ENCODE measurements at regions of chr2 and their contacts with region 1.

Region 1: DNA sequence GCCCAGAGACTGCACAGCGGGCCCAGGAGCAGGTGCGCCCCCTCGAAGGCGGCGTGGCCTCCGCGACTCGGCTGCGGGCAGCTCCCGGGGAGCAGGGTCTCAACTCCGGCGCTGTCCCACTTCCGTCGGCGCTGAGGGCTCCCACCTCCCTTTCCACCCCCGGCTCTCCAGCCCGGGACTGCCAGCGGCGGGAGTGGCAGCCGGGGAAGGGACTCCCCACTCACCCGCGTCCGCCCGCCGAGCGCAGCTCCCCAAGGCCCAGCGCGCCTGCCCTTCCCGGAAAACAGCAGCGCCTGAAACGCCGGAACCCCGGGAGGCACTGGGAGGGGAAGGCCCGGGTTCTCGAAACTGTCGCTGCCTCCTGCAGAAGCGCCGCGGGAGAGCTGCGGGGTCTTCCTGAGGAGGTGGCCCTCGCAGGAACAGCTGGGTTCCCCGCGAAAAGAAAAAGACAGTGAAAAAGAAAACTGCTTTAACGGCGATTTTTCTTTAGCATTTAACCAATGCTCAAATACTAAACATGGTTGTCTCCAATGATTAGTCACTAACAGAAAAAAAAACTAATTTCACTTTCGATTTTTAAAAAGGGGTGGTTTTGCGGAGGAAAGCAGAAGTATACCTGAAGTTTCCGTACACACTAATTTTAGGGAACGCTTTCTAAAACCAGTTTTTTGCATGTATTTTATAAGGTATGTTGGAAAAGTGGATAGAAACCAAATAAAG is at the start of gene NMI:
- DNase-seq: peak; percentile 46 to 80 (median 73)
- H3K4me3 ChIP-seq: peak within 1 kb of the TSS; percentile 63
- H3K4me3 Mint-ChIP-seq: peak within 1 kb of the TSS; percentile 90 to 96 (median 95)
- H3K27ac ChIP-seq: peak within 1 kb of the TSS; percentile 93
- H3K27ac Mint-ChIP-seq: peak within 1 kb of the TSS; percentile 93 to 99 (median 98)
- H3K4me1 ChIP-seq: peaks cover 37% of the 10 kb centered on the region
- H3K4me1 Mint-ChIP-seq: peaks cover 42 to 58% (median 57%) of the 10 kb centered on the region in 3 donors
- H3K27me3 ChIP-seq: no peaks in the 10 kb centered on the region
- H3K27me3 Mint-ChIP-seq: peaks cover 0 to 3% of the 10 kb centered on the region in 2 donors
- total RNA-seq, gene NMI: 34.5 to 35.7 TPM

Region 2: DNA sequence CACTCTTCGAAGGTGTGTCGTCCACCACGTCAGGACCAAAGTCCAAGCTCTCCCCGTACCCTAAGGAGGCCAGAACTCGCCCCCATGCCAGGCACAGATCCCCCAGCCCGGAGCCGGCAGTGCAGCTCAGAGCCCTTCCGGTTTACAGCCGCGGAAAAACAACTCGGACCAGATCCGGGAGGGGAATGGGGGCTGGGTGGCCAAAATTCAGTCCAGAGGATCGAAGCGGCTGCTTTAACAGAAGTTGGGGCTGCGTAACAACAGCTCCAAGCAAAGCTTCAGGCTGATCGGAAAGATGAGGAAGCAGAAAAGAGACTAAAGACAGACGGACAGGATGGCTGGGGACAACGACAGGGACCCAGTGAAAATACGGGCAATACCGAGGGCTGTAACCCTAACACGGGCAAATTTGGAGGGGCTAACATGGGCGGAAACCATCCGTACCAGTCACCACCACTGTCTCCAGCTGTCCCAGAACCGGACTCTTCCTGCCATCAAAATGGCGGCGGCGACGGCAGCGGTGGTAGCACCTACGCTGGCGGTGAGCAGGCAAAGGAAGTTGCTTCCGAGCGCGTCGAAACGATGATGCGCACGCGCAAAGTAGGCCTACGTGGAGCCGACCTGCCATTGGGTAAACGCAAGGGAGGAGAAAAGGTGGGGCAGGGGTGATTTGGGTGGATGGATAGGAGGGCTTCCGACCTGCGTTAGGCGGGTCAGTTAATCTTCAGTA is 1702.1 kb before region 1 on chr2 and contains the start of gene MMADHC:
- CTCF ChIA-PET with region 1: no interaction called
- POLR2A ChIA-PET with region 1: interaction called, 10 read pairs
- DNase-seq: peak; percentile 86 to 96 (median 91)
- H3K4me3 ChIP-seq: peak within 1 kb of the TSS; percentile 94
- H3K4me3 Mint-ChIP-seq: peak within 1 kb of the TSS; percentile 92 to 99 (median 95)
- H3K27ac ChIP-seq: peak within 1 kb of the TSS; percentile 98
- H3K27ac Mint-ChIP-seq: peak within 1 kb of the TSS; percentile 96 to 100 (median 98)
- H3K4me1 ChIP-seq: peaks cover 42% of the 10 kb centered on the region
- H3K4me1 Mint-ChIP-seq: peaks cover 42 to 56% (median 54%) of the 10 kb centered on the region in 3 donors
- H3K27me3 ChIP-seq: no peaks in the 10 kb centered on the region
- H3K27me3 Mint-ChIP-seq: peaks cover 8 to 31% of the 10 kb centered on the region in 2 donors
- total RNA-seq, gene MMADHC: 149 to 156 TPM

Region 3: DNA sequence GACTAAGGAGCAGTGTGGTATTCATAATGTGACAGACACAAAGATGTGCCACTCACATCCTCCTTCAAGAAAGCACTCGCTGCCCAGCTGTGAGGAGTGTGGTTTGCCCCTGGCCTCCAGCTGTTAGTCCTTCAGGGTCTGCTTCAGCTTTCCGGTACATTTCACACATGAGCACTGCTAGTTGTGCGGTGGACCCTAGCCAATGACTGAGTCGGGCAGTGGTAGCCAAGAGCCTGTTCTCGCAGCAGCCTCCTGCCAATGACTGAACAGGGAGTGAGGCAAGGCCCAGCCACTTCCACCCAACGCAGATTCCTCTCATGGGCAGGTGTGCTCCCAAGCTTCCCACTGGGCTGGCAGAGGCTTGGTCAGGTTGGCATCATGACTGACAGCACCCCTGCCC is 282.2 kb before region 1 on chr2:
- CTCF ChIA-PET with region 1: no interaction called
- POLR2A ChIA-PET with region 1: no interaction called
- DNase-seq: peak in 1 of 5 donors; percentile 41
- H3K4me3 ChIP-seq: no peak overlapping the region
- H3K4me3 Mint-ChIP-seq: no peak overlapping the region
- H3K27ac ChIP-seq: no peak overlapping the region
- H3K27ac Mint-ChIP-seq: no peak overlapping the region
- H3K4me1 ChIP-seq: no peaks in the 10 kb centered on the region
- H3K4me1 Mint-ChIP-seq: no peaks in the 10 kb centered on the region
- H3K27me3 ChIP-seq: no peaks in the 10 kb centered on the region
- H3K27me3 Mint-ChIP-seq: no peaks in the 10 kb centered on the region

Region 4: DNA sequence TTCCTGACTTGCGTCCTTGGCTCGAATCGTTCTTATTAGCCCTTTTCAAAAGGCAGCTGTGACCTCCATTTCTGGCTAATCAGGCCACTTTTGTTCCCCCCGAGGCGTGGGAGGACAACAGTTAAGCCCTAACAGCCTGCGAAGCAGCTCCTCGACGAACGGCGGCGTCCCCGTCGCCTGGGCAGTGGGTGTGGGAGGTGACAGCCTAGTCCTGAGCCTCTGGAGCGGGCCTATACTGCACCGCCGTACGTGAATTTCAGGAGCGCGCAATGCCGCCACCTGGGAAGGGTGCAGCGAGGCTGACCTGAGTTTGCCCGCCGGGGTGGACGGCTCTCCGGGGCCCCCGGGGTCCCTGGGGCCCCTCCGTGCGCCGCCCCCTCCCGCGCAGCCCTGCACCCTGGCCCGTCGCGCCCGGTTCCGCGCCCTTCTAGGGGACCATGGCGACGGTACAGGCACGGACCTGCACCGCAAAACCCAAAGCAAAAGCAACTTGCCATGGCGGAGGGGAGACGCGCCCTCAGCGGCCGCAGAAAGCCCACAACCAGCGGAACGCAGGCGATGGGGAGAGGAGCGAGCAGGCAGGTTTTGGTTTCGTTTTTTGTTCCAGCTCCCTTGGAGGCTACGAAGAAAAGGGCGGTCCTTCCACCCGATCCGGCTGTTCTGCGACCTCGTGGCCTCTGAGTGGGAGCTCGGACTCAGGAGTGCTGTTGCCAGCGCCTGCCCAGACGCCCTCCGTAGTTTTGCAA is 28.1 kb before region 1 on chr2 and contains the start of gene RBM43:
- CTCF ChIA-PET with region 1: interaction called, 20 read pairs
- POLR2A ChIA-PET with region 1: interaction called, 61 read pairs
- DNase-seq: peak; percentile 75 to 91 (median 86)
- H3K4me3 ChIP-seq: peak within 1 kb of the TSS; percentile 72
- H3K4me3 Mint-ChIP-seq: peak within 1 kb of the TSS; percentile 83 to 96 (median 94)
- H3K27ac ChIP-seq: peak within 1 kb of the TSS; percentile 98
- H3K27ac Mint-ChIP-seq: peak within 1 kb of the TSS; percentile 89 to 99 (median 98)
- H3K4me1 ChIP-seq: peaks cover 7% of the 10 kb centered on the region
- H3K4me1 Mint-ChIP-seq: peaks cover 30 to 39% (median 36%) of the 10 kb centered on the region in 3 donors
- H3K27me3 ChIP-seq: no peaks in the 10 kb centered on the region
- H3K27me3 Mint-ChIP-seq: peaks cover 0 to 1% of the 10 kb centered on the region in 2 donors
- total RNA-seq, gene RBM43: 2.8 to 3.4 TPM

Region 5: DNA sequence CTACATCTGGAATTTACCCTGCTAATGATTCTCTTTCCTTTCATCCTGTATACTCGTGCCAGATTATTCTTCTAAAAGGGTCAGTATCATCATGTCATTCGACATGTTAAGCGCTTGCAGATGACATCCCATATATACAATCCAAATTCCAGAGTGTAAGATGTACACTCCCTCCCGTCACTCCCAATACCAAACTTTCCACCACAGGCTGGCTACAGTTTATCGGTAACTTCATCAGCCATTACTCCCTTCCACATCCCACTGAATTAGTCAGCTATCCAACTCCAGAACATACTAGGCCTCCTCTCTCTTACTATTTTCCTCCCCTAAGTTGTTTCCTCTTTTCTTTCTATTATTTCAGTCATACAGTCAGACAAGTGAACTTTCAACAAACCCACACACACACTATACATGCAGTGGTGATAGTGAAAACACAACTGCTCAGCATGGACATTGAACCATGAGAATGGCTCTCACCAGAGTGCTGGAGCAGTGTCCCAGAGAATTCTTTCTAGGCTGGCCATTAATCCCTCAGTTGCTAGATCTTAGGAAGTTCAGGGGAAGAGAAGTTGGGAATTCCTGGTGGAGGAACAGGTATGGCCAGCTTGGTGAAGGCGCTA is 10.5 kb after region 1 on chr2:
- CTCF ChIA-PET with region 1: no interaction called
- POLR2A ChIA-PET with region 1: no interaction called
- DNase-seq: no peak
- H3K4me3 ChIP-seq: no peak overlapping the region
- H3K4me3 Mint-ChIP-seq: no peak overlapping the region
- H3K27ac ChIP-seq: no peak overlapping the region
- H3K27ac Mint-ChIP-seq: no peak overlapping the region
- H3K4me1 ChIP-seq: no peaks in the 10 kb centered on the region
- H3K4me1 Mint-ChIP-seq: no peaks in the 10 kb centered on the region
- H3K27me3 ChIP-seq: no peaks in the 10 kb centered on the region
- H3K27me3 Mint-ChIP-seq: peaks cover 4 to 38% of the 10 kb centered on the region in 2 donors

Region 6: DNA sequence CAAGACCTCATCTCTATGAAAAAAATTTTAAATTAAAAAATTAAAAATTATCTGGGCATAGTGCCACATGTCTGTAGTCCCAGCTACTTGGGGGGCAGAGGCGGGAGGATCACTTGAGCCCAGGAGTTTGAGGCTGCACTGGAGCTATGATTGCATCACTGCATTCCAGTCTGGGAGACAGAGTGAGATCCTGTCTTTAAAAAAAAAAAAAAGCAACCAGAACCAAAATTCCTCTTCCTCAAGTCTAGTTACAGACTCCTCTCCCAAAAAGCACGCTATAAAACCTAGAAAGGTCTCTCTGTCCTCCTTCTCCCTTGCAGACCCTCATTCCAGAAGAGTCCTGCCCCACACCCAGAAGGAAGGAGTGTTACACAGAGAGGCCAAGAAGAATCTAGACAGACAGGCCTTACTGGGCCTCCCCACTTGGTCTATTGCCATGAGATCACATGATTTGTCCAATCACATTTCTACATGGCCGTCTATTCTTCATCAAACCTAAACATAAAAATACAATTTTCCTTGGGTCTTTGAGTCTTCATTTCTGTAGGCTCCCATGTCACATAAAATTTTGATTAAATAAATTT is 91.9 kb after region 1 on chr2:
- CTCF ChIA-PET with region 1: no interaction called
- POLR2A ChIA-PET with region 1: no interaction called
- DNase-seq: no peak
- H3K4me3 ChIP-seq: no peak overlapping the region
- H3K4me3 Mint-ChIP-seq: no peak overlapping the region
- H3K27ac ChIP-seq: no peak overlapping the region
- H3K27ac Mint-ChIP-seq: no peak overlapping the region
- H3K4me1 ChIP-seq: no peaks in the 10 kb centered on the region
- H3K4me1 Mint-ChIP-seq: no peaks in the 10 kb centered on the region
- H3K27me3 ChIP-seq: no peaks in the 10 kb centered on the region
- H3K27me3 Mint-ChIP-seq: peaks cover 0 to 2% of the 10 kb centered on the region in 2 donors

Region 7: GRCh38 chr2:151828143-151828889 is 538.8 kb after region 1 on chr2 and contains the start of gene ARL5A:
- CTCF ChIA-PET with region 1: no interaction called
- POLR2A ChIA-PET with region 1: interaction called, 10 read pairs
- DNase-seq: peak; percentile 92 to 96 (median 96)
- H3K4me3 ChIP-seq: peak within 1 kb of the TSS; percentile 63
- H3K4me3 Mint-ChIP-seq: peak within 1 kb of the TSS; percentile 82 to 97 (median 88)
- H3K27ac ChIP-seq: peak within 1 kb of the TSS; percentile 52
- H3K27ac Mint-ChIP-seq: peak within 1 kb of the TSS; percentile 78 to 95 (median 92)
- H3K4me1 ChIP-seq: peaks cover 32% of the 10 kb centered on the region
- H3K4me1 Mint-ChIP-seq: peaks cover 47 to 52% (median 51%) of the 10 kb centered on the region in 3 donors
- H3K27me3 ChIP-seq: no peaks in the 10 kb centered on the region
- H3K27me3 Mint-ChIP-seq: peaks cover 0 to 3% of the 10 kb centered on the region in 2 donors
- total RNA-seq, gene ARL5A: 58.4 to 67.6 TPM